GM10248 (cell line): ENCODE measurements at regions of chr11 and their contacts with region 1.

Region 1: GRCh38 chr11:19453651-19454257 is 213.0 kb upstream of the E2F8 start:
- DNase-seq: no peak
- CTCF ChIP-seq: no peak

Region 2: GRCh38 chr11:19436932-19437331 is 16.8 kb before region 1 on chr11:
- CTCF ChIA-PET with region 1: interaction called, 11 read pairs
- POLR2A ChIA-PET with region 1: no interaction called
- DNase-seq: no peak
- CTCF ChIP-seq: no peak

Region 3: GRCh38 chr11:19466314-19466713 is 12.6 kb after region 1 on chr11:
- CTCF ChIA-PET with region 1: interaction called, 10 read pairs
- POLR2A ChIA-PET with region 1: no interaction called
- DNase-seq: no peak
- CTCF ChIP-seq: no peak

Region 4: DNA sequence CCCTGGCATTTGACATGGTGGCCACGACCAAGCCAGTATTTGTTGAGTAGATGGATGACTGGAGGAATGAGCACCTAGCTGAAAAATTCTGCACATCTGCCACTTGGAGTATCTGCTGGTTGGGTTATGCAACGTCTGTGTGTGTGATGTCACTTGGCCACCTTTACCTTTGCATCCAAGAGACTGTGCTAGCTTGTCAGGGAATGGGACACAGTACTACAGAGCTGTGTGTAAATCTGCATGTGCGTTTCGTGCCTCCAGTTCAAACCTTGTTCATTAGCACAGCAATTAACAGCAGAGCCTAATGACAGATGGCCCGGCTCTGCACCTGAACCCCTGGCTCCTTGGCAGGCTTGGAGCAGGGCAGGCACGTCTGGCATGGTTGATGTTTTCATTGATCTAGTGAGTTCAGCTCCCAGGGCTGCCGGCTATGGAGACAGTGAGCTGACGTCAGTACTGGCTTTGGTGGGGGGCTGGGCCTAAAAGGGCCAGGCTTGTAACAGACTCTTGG is 70.5 kb after region 1 on chr11:
- CTCF ChIA-PET with region 1: no interaction called
- POLR2A ChIA-PET with region 1: no interaction called
- DNase-seq: no peak
- CTCF ChIP-seq: no peak

Region 5: GRCh38 chr11:20207781-20208621 is 754.2 kb after region 1 on chr11:
- CTCF ChIA-PET with region 1: no interaction called
- POLR2A ChIA-PET with region 1: no interaction called
- DNase-seq: no peak
- CTCF ChIP-seq: no peak